ENCODE measurements at regions of chr4 and their contacts with region 1.

Region 1: GRCh38 chr4:1351854-1352633 is 5.0 kb downstream of the UVSSA start:
- DNase-seq: peak; percentile 20
- ATAC-seq: peak; percentile 71
- H3K4me3 ChIP-seq: no peak overlapping the region
- H3K27ac ChIP-seq: no peak overlapping the region
- H3K4me1 ChIP-seq: peaks cover 10% of the 10 kb centered on the region
- H3K27me3 ChIP-seq: no peaks in the 10 kb centered on the region
- CTCF ChIP-seq: peak; percentile 85 to 97 (median 91)
- EP300 ChIP-seq: no peak
- POLR2A ChIP-seq: no peak
- RAD21 ChIP-seq: peak; percentile 79

Region 2: GRCh38 chr4:1009542-1010394 is 342.3 kb before region 1 on chr4:
- CTCF ChIA-PET with region 1: no interaction called
- POLR2A ChIA-PET with region 1: interaction called, 5 read pairs
- RAD21 ChIA-PET with region 1: no interaction called
- SMC1A ChIA-PET with region 1: no interaction called
- in situ Hi-C with region 1: loop called (anchors 5 kb)
- intact Hi-C with region 1: loop called (anchors 2 kb)
- DNase-seq: no peak
- ATAC-seq: peak; percentile 67
- H3K4me3 ChIP-seq: peak overlapping the region; percentile 75; the same call in 1 of the 2 replicates
- H3K27ac ChIP-seq: no peak overlapping the region
- H3K4me1 ChIP-seq: peaks cover 11% of the 10 kb centered on the region
- H3K27me3 ChIP-seq: peaks cover 0 to 5% of the 10 kb centered on the region in 2 experiments; a peak in 3 of 4 replicates
- CTCF ChIP-seq: peak in 2 of 3 experiments; percentile 18 to 29; a peak in 3 of 6 replicates
- EP300 ChIP-seq: no peak
- POLR2A ChIP-seq: no peak
- RAD21 ChIP-seq: no peak

Region 3: DNA sequence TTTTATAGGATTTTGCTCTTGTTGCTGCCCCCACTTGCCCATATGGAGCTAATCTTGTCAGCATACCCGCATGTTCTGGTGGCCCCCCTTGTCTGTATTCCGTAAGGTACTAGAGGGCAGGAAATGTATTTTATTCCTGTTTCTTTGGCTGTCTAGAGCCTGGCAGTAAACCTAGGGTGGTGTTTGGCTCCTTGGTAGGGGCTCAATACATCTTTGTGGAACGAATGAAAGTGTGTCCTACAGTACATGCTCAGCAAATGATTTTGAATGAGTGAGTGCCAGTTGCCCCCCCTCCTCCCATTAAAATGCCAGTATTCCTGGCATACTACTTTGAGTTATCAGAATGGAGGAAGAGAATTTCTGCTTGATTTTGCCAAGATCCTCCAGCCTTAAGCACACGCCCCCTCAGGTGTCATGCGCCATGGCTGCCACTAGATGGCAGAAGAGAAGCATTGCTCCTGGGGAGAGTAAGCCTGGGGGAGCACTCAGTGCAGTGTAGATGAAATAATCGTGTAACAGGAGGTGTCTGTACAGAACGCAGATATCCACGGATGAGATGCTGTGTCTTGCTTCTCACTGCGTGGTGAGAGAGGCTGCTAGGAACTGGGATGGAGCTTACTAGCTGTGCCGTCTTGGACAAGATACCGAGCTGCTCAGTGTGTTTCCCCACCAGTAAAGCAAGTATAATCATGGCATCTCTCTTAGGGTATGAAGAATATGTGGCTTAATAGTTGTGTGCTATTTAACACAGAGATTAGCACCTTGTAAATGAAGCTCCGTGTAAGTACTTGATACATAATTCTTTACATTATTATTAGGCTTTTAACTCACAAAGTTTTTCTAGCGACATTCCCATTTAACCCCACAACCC is 221.5 kb before region 1 on chr4:
- CTCF ChIA-PET with region 1: interaction called, 48 read pairs
- POLR2A ChIA-PET with region 1: no interaction called
- RAD21 ChIA-PET with region 1: interaction called, 29 read pairs
- SMC1A ChIA-PET with region 1: interaction called, 13 read pairs
- in situ Hi-C with region 1: loop called (anchors 5 kb)
- intact Hi-C with region 1: loop called (anchors 1 kb)
- DNase-seq: peak; percentile 57
- ATAC-seq: peak; percentile 100
- H3K4me3 ChIP-seq: no peak overlapping the region
- H3K27ac ChIP-seq: no peak overlapping the region
- H3K4me1 ChIP-seq: no peaks in the 10 kb centered on the region; the same call in 1 of the 2 replicates
- H3K27me3 ChIP-seq: no peaks in the 10 kb centered on the region
- CTCF ChIP-seq: peak; percentile 99 to 100 (median 99); a peak in 5 of 6 replicates
- EP300 ChIP-seq: no peak
- POLR2A ChIP-seq: no peak
- RAD21 ChIP-seq: peak; percentile 100

Measured in GM12878 (cell line).